ENCODE measurements at regions of chr16 and their contacts with region 1.

Region 1: GRCh38 chr16:70685938-70686375 is at the start of gene MTSS2:
- DNase-seq: peak; percentile 77
- H3K4me3 Mint-ChIP-seq: peak within 1 kb of the TSS; percentile 76
- H3K27ac Mint-ChIP-seq: peak within 1 kb of the TSS; percentile 75
- H3K4me1 Mint-ChIP-seq: peaks cover 37% of the 10 kb centered on the region
- H3K27me3 Mint-ChIP-seq: no peaks in the 10 kb centered on the region
- CTCF ChIP-seq: no peak
- total RNA-seq, gene MTSS2: 75.8 and 78.7 TPM in 2 replicates

Region 2: GRCh38 chr16:70703041-70703834 is 17.3 kb after region 1 on chr16:
- CTCF ChIA-PET with region 1: no interaction called
- POLR2A ChIA-PET with region 1: interaction called, 3 read pairs
- intact Hi-C with region 1: loop called (anchors 2 kb)
- DNase-seq: no peak
- H3K4me3 Mint-ChIP-seq: no peak overlapping the region
- H3K27ac Mint-ChIP-seq: no peak overlapping the region
- H3K4me1 Mint-ChIP-seq: peaks cover 39% of the 10 kb centered on the region
- H3K27me3 Mint-ChIP-seq: no peaks in the 10 kb centered on the region
- CTCF ChIP-seq: no peak

Region 3: DNA sequence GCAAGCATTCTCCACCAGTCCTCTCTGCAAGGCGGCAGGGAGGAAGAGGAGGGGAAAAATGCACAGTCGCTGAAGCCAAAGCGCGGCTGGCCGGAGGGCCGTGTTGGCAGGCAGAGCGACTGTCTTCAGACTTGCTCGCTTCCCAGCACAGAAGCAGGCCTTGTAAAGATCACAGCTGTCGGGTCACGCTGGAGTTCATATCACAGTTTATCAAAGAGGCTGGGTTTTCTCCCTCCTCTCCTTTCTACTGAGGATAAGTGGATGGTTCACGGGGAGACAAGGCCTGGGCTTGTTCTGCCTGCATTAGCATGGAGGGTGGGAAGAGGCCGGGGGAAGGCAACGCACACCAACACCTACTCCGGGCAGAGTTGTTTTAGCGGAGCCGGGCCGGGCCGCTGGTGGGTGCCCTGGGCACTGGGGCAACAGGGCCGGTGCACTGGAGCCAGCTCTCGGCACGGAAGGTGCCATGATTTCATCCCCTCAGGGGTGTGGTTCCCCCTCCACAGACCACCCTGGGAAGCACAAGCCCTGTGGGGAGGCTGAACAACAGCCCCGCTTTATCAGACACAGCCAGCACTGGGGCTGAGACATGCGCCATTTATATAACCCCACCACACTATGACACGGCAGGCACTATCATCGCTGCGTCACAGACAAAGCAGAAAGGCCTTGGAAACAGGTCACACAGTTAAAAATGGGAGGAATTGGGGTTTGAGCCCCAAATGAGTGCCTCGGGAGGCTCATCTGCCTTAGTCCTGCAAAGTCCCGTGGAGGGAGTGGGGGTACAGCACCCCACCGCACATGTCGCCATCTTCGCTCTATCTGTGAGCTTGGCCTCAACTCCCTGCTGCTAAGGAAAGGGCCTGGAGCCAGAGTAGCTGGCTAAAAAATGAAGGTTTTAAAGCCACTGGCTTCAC is 40.2 kb after region 1 on chr16:
- CTCF ChIA-PET with region 1: no interaction called
- POLR2A ChIA-PET with region 1: no interaction called
- intact Hi-C with region 1: no loop called
- DNase-seq: no peak
- H3K4me3 Mint-ChIP-seq: no peak overlapping the region
- H3K27ac Mint-ChIP-seq: no peak overlapping the region
- H3K4me1 Mint-ChIP-seq: peaks cover 5% of the 10 kb centered on the region
- H3K27me3 Mint-ChIP-seq: no peaks in the 10 kb centered on the region
- CTCF ChIP-seq: no peak

Region 4: GRCh38 chr16:70737377-70738082 is 51.6 kb after region 1 on chr16:
- CTCF ChIA-PET with region 1: interaction called, 5 read pairs
- POLR2A ChIA-PET with region 1: no interaction called
- intact Hi-C with region 1: loop called (anchors 2 kb)
- DNase-seq: no peak
- H3K4me3 Mint-ChIP-seq: no peak overlapping the region
- H3K27ac Mint-ChIP-seq: no peak overlapping the region
- H3K4me1 Mint-ChIP-seq: no peaks in the 10 kb centered on the region
- H3K27me3 Mint-ChIP-seq: no peaks in the 10 kb centered on the region
- CTCF ChIP-seq: no peak